Heart left ventricle (tissue), 16 donors: ENCODE measurements at regions of chr1 and their contacts with region 1.

Region 1: DNA sequence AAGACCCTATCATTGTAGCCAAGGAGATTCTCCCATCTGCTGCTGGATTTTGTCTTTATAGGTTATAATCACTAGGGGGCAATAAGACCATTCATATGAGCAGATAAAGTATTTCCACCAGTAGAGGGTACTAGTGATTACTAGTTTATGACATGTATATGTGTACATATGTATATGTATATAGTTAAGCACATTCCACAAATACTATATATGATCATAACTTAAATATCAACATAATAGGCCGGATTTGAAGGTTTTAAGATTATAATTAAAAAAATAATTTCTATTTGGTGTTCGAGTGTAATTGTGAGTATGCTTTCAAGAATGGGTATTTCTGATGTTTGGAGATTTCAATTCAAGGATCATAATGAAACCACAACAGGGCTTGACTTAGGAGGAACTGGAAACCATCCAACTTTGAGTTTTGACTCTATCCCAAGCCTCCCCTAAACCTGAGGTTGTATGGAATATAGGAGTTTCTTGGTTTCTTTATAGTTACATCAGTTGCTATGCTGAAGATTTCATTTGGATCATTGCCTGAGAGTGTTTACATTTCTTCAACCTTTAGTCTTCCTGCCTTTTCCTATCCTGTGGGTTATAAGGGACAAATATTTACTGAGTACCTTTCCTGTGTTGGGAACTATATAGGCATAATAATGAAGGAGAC is 16.9 kb downstream of the TCEANC2 start:
- DNase-seq: no peak
- ATAC-seq: peak; percentile 51 to 72 (median 60)
- H3K4me3 ChIP-seq: no peak overlapping the region
- H3K27ac ChIP-seq: no peak overlapping the region
- H3K4me1 ChIP-seq: no peaks in the 10 kb centered on the region
- H3K27me3 ChIP-seq: no peaks in the 10 kb centered on the region
- CTCF ChIP-seq: peak; percentile 53 to 90 (median 78)
- POLR2A ChIP-seq: no peak

Region 2: DNA sequence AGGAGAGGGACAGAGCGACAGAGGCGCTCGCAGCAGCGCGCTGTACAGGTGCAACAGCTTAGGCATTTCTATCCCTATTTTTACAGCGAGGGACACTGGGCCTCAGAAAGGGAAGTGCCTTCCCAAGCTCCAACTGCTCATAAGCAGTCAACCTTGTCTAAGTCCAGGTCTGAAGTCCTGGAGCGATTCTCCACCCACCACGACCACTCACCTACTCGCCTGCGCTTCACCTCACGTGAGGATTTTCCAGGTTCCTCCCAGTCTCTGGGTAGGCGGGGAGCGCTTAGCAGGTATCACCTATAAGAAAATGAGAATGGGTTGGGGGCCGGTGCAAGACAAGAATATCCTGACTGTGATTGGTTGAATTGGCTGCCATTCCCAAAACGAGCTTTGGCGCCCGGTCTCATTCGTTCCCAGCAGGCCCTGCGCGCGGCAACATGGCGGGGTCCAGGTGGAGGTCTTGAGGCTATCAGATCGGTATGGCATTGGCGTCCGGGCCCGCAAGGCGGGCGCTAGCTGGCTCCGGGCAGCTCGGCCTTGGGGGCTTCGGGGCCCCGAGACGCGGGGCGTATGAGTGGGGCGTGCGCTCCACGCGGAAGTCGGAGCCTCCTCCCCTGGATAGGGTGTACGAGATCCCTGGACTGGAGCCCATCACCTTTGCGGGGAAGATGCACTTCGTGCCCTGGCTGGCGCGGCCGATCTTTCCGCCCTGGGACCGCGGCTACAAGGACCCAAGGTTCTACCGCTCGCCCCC is 129.6 kb after region 1 on chr1 and contains the starts of genes CYB5RL and MRPL37:
- intact Hi-C with region 1: loop called in 1 of 10 experiments (anchors 10 kb)
- DNase-seq: peak; percentile 92 to 96 (median 94)
- ATAC-seq: peak; percentile 98 to 100 (median 99)
- H3K4me3 ChIP-seq: peak within 1 kb of the TSS; percentile 62 to 96 (median 84)
- H3K27ac ChIP-seq: peak within 1 kb of the TSS; percentile 6 to 91 (median 72)
- H3K4me1 ChIP-seq: peaks cover 0 to 30% (median 19%) of the 10 kb centered on the region in 12 donors
- H3K27me3 ChIP-seq: no peaks in the 10 kb centered on the region
- CTCF ChIP-seq: no peak
- POLR2A ChIP-seq: peak in 1 of 2 donors; percentile 65
- total RNA-seq, gene CYB5RL: 2.8 to 7.5 (median 4.4) TPM
- total RNA-seq, gene MRPL37: 75.6 to 122 (median 89.3) TPM

Region 3: DNA sequence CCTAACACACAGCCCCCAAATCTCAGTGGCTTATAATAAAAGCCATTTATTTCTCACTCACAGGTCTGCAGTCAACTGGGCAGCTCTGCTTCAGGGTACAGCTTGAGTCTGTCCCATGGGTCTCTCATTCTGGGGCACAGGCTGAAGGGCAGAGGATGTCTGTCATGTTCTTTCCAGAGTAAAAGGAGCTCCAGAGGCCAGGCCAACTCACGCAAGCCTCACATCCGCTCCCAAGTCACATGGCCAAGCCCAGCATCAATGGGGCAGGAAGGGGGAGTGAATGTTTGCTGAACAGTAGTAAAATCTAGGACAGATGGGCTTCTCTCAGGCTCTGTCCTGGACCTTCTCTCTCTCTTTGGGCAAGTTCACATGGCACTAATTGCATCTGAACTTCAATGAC is 343.0 kb after region 1 on chr1:
- intact Hi-C with region 1: loop called in 3 of 10 experiments (anchors 5 to 10 kb)
- DNase-seq: peak in 4 of 5 donors; percentile 60 to 70 (median 61)
- ATAC-seq: peak; percentile 56 to 90 (median 62)
- H3K4me3 ChIP-seq: no peak overlapping the region
- H3K27ac ChIP-seq: peak overlapping the region in 9 of 12 donors; percentile 9 to 62 (median 43)
- H3K4me1 ChIP-seq: peaks cover 0 to 32% (median 9%) of the 10 kb centered on the region in 12 donors
- H3K27me3 ChIP-seq: no peaks in the 10 kb centered on the region
- CTCF ChIP-seq: no peak
- POLR2A ChIP-seq: no peak

Region 4: DNA sequence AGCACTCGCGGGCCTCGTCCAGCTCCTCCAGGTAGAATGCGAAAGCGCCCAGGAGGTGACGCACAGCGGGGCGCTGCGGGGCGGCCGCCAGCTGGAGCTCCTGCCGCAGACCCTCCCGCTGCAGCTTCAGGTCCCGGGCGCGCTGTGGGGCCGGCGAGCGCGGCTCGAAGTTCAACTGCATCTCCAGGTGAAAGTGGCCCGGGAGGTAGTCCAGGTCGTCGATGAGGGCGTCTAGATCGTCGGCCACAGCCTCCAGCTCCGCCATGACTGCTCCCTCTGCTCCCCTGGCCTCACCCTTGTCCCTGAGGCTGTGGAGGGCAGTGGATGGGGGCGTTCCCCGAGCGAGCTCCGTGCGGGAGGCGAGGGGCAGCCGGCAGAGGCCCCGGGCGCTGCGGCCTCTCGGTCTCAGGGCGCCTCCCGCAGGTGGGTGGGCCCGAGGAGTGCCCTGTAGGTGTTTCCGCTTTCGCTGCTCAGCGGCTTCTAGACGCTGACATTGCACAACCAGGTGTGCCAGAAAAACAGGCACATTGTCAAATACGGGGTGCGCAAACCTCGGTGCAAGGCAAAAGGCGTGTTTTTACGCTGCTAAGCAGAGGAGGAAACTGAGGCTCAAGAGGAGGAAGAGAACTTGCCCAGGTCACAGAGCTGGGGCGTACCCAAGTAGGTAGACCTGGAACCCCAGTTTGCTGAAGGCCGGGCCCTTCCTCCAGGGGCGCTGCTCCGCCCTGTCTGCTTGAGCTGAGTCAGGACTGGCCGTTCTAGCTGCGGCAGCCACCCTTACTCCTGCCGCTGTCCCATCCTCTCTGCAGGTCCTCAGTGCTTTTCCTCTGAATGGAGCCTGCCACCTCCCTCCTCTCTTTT is 730.8 kb after region 1 on chr1 and contains the start of gene TTC22:
- intact Hi-C with region 1: loop called in 5 of 10 experiments (anchors 5 to 10 kb)
- DNase-seq: no peak
- ATAC-seq: peak; percentile 47 to 78 (median 68)
- H3K4me3 ChIP-seq: peak within 1 kb of the TSS in 11 of 12 donors; percentile 0 to 61 (median 38)
- H3K27ac ChIP-seq: peak within 1 kb of the TSS in 2 of 12 donors; percentile 43 to 49
- H3K4me1 ChIP-seq: peaks cover 0 to 21% (median 5%) of the 10 kb centered on the region in 12 donors
- H3K27me3 ChIP-seq: peaks cover 0 to 45% (median 19%) of the 10 kb centered on the region in 9 donors
- CTCF ChIP-seq: peak in 8 of 12 donors; percentile 10 to 37 (median 26)
- POLR2A ChIP-seq: no peak
- total RNA-seq, gene TTC22: 0.12 to 2.5 (median 0.29) TPM in 7 of 9 donors, not detected in the others

Region 5: DNA sequence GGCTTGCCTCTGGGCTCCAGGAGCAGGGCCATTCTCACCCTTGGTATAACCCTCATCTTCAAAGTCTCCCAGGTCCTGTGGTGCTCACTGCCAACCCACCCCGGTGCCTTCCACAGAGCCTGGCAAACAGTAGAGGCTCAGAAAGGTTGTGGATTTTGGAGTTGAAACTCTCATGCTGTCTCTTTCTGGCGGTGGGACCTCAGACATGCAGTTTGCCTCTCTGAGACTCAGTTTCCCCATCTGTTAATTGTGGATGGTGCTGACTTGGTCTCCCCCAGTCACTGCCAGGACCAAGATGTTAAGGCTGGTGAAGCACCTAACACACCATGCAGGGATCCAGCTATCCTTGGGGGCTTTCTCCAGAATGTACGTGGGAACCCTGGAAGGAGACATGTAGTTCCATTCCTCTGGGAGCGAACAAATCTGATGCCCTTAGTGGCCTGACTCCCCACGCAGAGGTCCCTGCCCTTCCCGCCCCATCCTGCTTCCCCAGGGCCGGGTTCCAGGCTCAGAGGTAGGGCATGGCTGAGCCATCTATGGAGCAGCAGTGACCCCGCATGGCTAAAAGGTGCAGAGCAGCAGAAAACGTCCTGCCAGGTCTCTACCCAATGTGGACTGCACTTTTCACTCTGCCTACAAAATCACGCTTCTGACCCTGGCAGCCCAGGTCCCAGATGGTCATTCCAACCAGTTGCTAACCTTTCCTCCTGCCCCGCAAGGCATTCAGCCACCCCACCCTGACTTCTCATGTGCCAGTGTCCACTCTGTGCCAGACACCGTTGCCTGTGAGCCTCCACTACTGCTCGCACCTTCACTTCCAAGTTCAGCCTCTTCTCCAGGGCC is 740.0 kb after region 1 on chr1:
- intact Hi-C with region 1: loop called in 9 of 10 experiments (anchors 5 to 10 kb)
- DNase-seq: peak in 4 of 5 donors; percentile 32 to 64 (median 56)
- ATAC-seq: peak; percentile 82 to 89 (median 86)
- H3K4me3 ChIP-seq: no peak overlapping the region
- H3K27ac ChIP-seq: no peak overlapping the region
- H3K4me1 ChIP-seq: no peaks in the 10 kb centered on the region
- H3K27me3 ChIP-seq: peaks cover 0 to 6% (median 0%) of the 10 kb centered on the region in 9 donors
- CTCF ChIP-seq: peak; percentile 60 to 79 (median 75)
- POLR2A ChIP-seq: no peak